Right lobe of liver (tissue), 6 donors: ENCODE measurements at regions of chr2 and their contacts with region 1.

Region 1: GRCh38 chr2:68121873-68122679 is 35.6 kb upstream of the PNO1 start:
- DNase-seq: peak; percentile 84 to 87 (median 85)
- ATAC-seq: peak; percentile 75 to 80 (median 79)
- H3K4me3 ChIP-seq: no peak overlapping the region
- H3K27ac ChIP-seq: no peak overlapping the region
- H3K4me1 ChIP-seq: peaks cover 0 to 24% (median 2%) of the 10 kb centered on the region in 4 donors
- H3K27me3 ChIP-seq: no peaks in the 10 kb centered on the region
- CTCF ChIP-seq: peak; percentile 94 to 97 (median 95)
- POLR2A ChIP-seq: no peak

Region 2: DNA sequence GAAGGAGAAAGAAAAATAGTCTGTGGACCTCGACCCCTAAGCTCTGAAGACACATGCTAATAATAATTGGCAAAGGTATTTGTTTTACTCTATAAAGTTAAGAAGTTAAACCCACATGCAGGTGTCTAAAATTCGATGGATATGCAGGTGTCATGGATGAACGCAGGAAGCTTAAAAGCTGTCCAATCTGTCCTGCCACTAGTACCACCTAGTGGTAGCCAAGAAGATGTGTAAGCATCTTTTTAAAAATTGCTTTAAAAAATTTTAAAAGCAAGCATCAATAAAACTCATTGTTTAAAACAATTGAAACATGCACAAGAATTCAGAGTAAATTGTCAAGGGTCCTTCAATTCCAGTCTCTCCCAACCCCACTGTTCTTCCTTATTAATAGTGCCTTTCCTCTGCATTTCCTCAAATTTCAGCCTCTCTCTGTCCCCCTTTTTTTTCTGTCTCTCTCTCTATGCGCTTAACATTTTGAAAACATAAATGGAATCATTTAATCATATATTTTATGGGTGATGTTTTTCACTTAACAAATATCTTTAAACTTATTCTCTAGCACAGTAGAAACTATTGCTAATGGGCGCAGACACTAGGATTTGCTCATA is 160.8 kb after region 1 on chr2:
- intact Hi-C with region 1: loop called in 1 of 2 experiments (anchors 5 kb)
- DNase-seq: no peak
- ATAC-seq: peak; percentile 52 to 77 (median 74)
- H3K4me3 ChIP-seq: no peak overlapping the region
- H3K27ac ChIP-seq: no peak overlapping the region
- H3K4me1 ChIP-seq: peaks cover 0 to 18% (median 5%) of the 10 kb centered on the region in 4 donors
- H3K27me3 ChIP-seq: no peaks in the 10 kb centered on the region
- CTCF ChIP-seq: peak; percentile 72 to 78 (median 76)
- POLR2A ChIP-seq: no peak